ENCODE measurements at regions of chr4 and their contacts with region 1.

Region 1: DNA sequence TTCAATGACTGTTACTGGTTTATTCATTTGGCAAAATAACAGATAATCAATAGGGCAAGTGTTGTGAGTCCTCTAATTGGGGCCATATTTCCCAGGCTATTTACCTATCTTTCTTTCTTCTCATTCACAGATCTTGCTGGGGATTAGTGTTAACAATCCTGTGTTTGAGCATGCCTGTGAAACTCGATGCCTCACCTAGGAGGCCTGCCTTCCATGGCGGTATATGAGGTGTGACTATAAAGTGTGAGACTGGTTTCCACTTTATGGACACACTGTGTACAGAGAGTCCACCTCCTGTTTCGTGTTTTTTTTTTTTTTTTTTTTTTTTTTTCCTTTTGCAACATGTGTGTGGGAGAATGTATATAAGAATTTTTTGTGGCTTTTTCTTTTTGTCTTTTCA is 199.3 kb downstream of the BMPR1B start:
- DNase-seq: no peak
- H3K4me3 ChIP-seq: no peak overlapping the region
- H3K27ac ChIP-seq: no peak overlapping the region
- H3K4me1 ChIP-seq: no peaks in the 10 kb centered on the region
- CTCF ChIP-seq: no peak

Region 2: DNA sequence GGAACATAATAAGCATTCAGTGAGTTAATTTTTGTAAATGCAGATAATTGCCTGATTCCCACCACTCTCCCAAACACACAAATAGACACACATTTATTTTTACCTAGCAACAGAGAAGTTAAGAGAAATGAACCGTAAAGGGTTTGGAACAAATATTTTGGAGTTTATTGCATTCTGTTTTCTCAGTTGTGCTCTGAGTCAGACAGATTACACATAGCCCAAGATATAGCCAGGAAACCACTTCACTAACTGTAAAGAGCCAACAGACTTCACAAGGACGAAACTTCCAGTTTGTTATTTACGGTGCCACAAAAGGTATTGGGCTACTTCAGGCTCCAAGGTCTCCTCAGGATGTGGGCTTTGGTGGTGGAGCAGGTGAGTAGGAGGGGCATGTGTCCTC is 17.7 kb after region 1 on chr4:
- CTCF ChIA-PET with region 1: no interaction called
- POLR2A ChIA-PET with region 1: interaction called, 10 read pairs
- intact Hi-C with region 1: no loop called
- DNase-seq: no peak
- H3K4me3 ChIP-seq: no peak overlapping the region
- H3K27ac ChIP-seq: no peak overlapping the region
- H3K4me1 ChIP-seq: no peaks in the 10 kb centered on the region
- CTCF ChIP-seq: no peak

Measured in OCI-LY7 (cell line).